Heart left ventricle (tissue), 16 donors: ENCODE measurements at regions of chr7 and their contacts with region 1.

Region 1: GRCh38 chr7:5646852-5647251 is 134.6 kb downstream of the RNF216 start:
- DNase-seq: peak in 1 of 5 donors; percentile 0
- ATAC-seq: peak in 2 of 4 donors; percentile 58 to 67
- H3K4me3 ChIP-seq: no peak overlapping the region
- H3K27ac ChIP-seq: no peak overlapping the region
- H3K4me1 ChIP-seq: peaks cover 0 to 30% (median 12%) of the 10 kb centered on the region in 12 donors
- H3K27me3 ChIP-seq: no peaks in the 10 kb centered on the region
- CTCF ChIP-seq: no peak
- POLR2A ChIP-seq: no peak

Region 2: GRCh38 chr7:5041047-5041446 is 605.8 kb before region 1 on chr7:
- intact Hi-C with region 1: no loop called
- DNase-seq: no peak
- ATAC-seq: no peak
- H3K4me3 ChIP-seq: no peak overlapping the region
- H3K27ac ChIP-seq: no peak overlapping the region
- H3K4me1 ChIP-seq: peaks cover 0 to 3% (median 0%) of the 10 kb centered on the region in 12 donors
- H3K27me3 ChIP-seq: no peaks in the 10 kb centered on the region
- CTCF ChIP-seq: no peak
- POLR2A ChIP-seq: no peak

Region 3: GRCh38 chr7:5574770-5575269 is 72.0 kb before region 1 on chr7:
- intact Hi-C with region 1: loop called in 2 of 10 experiments (anchors 5 to 10 kb)
- DNase-seq: peak; percentile 76 to 85 (median 78)
- ATAC-seq: peak; percentile 42 to 70 (median 60)
- H3K4me3 ChIP-seq: peak overlapping the region in 9 of 12 donors; percentile 8 to 33 (median 20)
- H3K27ac ChIP-seq: peak overlapping the region in 11 of 12 donors; percentile 30 to 90 (median 59)
- H3K4me1 ChIP-seq: peaks cover 0 to 29% (median 20%) of the 10 kb centered on the region in 12 donors
- H3K27me3 ChIP-seq: no peaks in the 10 kb centered on the region
- CTCF ChIP-seq: no peak
- POLR2A ChIP-seq: no peak

Region 4: GRCh38 chr7:5580714-5581395 is 66.0 kb before region 1 on chr7:
- intact Hi-C with region 1: loop called in 2 of 10 experiments (anchors 5 to 10 kb)
- DNase-seq: peak in 3 of 5 donors; percentile 37 to 53 (median 50)
- ATAC-seq: peak; percentile 28 to 86 (median 62)
- H3K4me3 ChIP-seq: no peak overlapping the region
- H3K27ac ChIP-seq: peak overlapping the region in 5 of 12 donors; percentile 11 to 50 (median 46)
- H3K4me1 ChIP-seq: peaks cover 0 to 15% (median 7%) of the 10 kb centered on the region in 12 donors
- H3K27me3 ChIP-seq: no peaks in the 10 kb centered on the region
- CTCF ChIP-seq: no peak
- POLR2A ChIP-seq: no peak

Region 5: GRCh38 chr7:5713124-5713912 is 66.5 kb after region 1 on chr7:
- intact Hi-C with region 1: no loop called
- DNase-seq: no peak
- ATAC-seq: peak in 1 of 4 donors; percentile 35
- H3K4me3 ChIP-seq: no peak overlapping the region
- H3K27ac ChIP-seq: no peak overlapping the region
- H3K4me1 ChIP-seq: no peaks in the 10 kb centered on the region
- H3K27me3 ChIP-seq: no peaks in the 10 kb centered on the region
- CTCF ChIP-seq: no peak
- POLR2A ChIP-seq: no peak

Region 6: GRCh38 chr7:5797716-5798115 is 150.9 kb after region 1 on chr7:
- intact Hi-C with region 1: no loop called
- DNase-seq: no peak
- ATAC-seq: no peak
- H3K4me3 ChIP-seq: no peak overlapping the region
- H3K27ac ChIP-seq: no peak overlapping the region
- H3K4me1 ChIP-seq: no peaks in the 10 kb centered on the region
- H3K27me3 ChIP-seq: no peaks in the 10 kb centered on the region
- CTCF ChIP-seq: no peak
- POLR2A ChIP-seq: no peak